WTC11 (cell line): ENCODE measurements at regions of chr19 and their contacts with region 1.

Region 1: DNA sequence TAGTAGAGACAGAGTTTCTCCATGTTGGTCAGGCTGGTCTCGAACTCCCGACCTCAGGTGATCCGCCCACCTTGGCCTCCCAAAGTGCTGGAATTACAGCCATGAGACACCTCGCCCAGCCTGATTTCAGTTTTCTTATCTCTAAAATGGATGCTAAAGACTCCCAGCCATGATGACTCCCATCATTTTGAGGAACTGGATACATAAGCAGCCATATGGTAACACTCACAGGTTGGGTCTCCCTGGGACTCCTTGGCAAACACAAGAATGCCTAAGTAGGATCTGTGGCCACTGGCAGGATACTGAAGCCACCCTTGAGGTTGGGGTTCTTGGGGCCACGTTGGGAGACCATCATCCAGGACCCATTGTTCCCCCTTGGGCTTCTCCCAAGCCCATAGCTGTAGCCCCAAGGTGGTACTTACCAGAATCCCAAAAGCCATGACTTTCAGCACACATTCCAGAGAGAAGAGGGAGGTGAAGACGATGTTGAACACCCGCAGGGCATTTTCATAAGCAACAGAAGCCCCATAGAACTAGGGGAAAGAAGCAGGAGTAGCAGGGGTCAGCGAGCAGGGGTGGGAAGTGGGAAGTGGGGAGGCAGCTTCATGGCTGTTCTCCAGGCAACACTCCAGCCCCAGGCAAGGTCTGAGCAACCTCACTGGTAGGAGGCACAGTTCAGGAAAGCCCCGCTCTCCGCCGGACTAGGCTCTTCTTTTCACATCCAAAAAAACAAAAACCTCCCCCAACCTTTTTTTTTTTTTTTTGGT is 102.5 kb downstream of the IER2 start:
- DNase-seq: no peak
- ATAC-seq: no peak
- H3K4me3 Mint-ChIP-seq: no peak overlapping the region
- H3K27ac Mint-ChIP-seq: no peak overlapping the region
- H3K4me1 Mint-ChIP-seq: peaks cover 6% of the 10 kb centered on the region
- H3K27me3 Mint-ChIP-seq: no peaks in the 10 kb centered on the region; the same call in 1 of the 2 replicates
- CTCF ChIP-seq: no peak

Region 2: GRCh38 chr19:13234518-13234917 is 18.2 kb before region 1 on chr19:
- CTCF ChIA-PET with region 1: interaction called, 11 read pairs
- POLR2A ChIA-PET with region 1: no interaction called
- DNase-seq: peak; percentile 76
- ATAC-seq: peak; percentile 92
- H3K4me3 Mint-ChIP-seq: no peak overlapping the region
- H3K27ac Mint-ChIP-seq: no peak overlapping the region
- H3K4me1 Mint-ChIP-seq: peaks cover 19% of the 10 kb centered on the region
- H3K27me3 Mint-ChIP-seq: peaks cover 3% of the 10 kb centered on the region; the same call in 1 of the 2 replicates
- CTCF ChIP-seq: peak; percentile 65